Mammary epithelial cell (primary cell): ENCODE measurements at regions of chr5 and their contacts with region 1.

Region 1: GRCh38 chr5:2461701-2462691 is 289.5 kb downstream of the IRX2 start:
- DNase-seq: no peak
- H3K4me3 ChIP-seq: no peak overlapping the region
- H3K27ac ChIP-seq: no peak overlapping the region
- H3K4me1 ChIP-seq: no peaks in the 10 kb centered on the region
- H3K27me3 ChIP-seq: no peaks in the 10 kb centered on the region
- CTCF ChIP-seq: no peak

Region 2: GRCh38 chr5:2502970-2503594 is 41.1 kb after region 1 on chr5:
- CTCF ChIA-PET with region 1: no interaction called
- dilution Hi-C with region 1: loop called (anchors 5 kb)
- in situ Hi-C with region 1: no loop called
- intact Hi-C with region 1: no loop called
- DNase-seq: no peak
- H3K4me3 ChIP-seq: no peak overlapping the region
- H3K27ac ChIP-seq: no peak overlapping the region
- H3K4me1 ChIP-seq: no peaks in the 10 kb centered on the region
- H3K27me3 ChIP-seq: no peaks in the 10 kb centered on the region
- CTCF ChIP-seq: no peak